Body of pancreas (tissue), 4 donors: ENCODE measurements at regions of chr17 and their contacts with region 1.

Region 1: DNA sequence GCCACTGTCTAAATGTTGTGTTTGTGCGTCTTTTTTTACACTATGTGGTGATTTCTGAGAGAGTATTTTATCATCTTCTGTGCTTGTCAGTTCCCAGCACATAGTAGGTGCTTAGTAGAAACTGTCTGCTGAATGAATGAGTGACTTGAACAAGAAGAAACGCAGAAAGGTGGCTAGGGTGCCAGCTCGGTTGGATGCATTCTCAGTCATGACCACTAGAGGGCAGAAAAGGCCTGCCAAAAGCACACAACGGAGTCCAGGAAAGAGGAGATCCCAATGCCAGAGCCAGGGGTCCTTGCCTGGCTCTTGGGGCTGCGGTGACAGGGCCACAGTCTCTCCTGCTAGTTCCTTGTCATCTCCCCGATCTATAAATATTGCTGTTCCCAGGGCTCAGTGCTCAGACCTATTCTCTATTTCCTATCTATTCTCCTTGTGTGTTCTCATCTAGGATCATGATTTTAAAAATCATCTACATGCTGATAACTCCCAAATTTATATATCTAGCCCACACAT is 57.3 kb upstream of the CCL1 start:
- DNase-seq: peak; percentile 67 to 74 (median 70)
- ATAC-seq: peak; percentile 56
- H3K4me3 ChIP-seq: no peak overlapping the region
- H3K27ac ChIP-seq: no peak overlapping the region
- H3K4me1 ChIP-seq: no peaks in the 10 kb centered on the region
- H3K27me3 ChIP-seq: peaks cover 0 to 8% of the 10 kb centered on the region in 2 donors
- CTCF ChIP-seq: peak; percentile 83 to 88 (median 86)
- POLR2A ChIP-seq: no peak

Region 2: GRCh38 chr17:34637548-34638525 is 217.5 kb after region 1 on chr17:
- intact Hi-C with region 1: loop called (anchors 10 kb)
- DNase-seq: peak; percentile 83 to 85 (median 84)
- ATAC-seq: peak; percentile 95
- H3K4me3 ChIP-seq: peak overlapping the region in 1 of 2 donors; percentile 23
- H3K27ac ChIP-seq: no peak overlapping the region
- H3K4me1 ChIP-seq: peaks cover 11% of the 10 kb centered on the region
- H3K27me3 ChIP-seq: no peaks in the 10 kb centered on the region
- CTCF ChIP-seq: peak; percentile 75 to 93 (median 89)
- POLR2A ChIP-seq: peak in 2 of 3 donors; percentile 23 to 43

Region 3: GRCh38 chr17:35119368-35120165 is 699.3 kb after region 1 on chr17 and contains the start of gene RAD51D:
- intact Hi-C with region 1: loop called (anchors 5 kb)
- DNase-seq: peak; percentile 73 to 83 (median 78)
- ATAC-seq: peak; percentile 96
- H3K4me3 ChIP-seq: peak within 1 kb of the TSS; percentile 60 to 65
- H3K27ac ChIP-seq: peak within 1 kb of the TSS; percentile 8 to 78 (median 69)
- H3K4me1 ChIP-seq: peaks cover 17% of the 10 kb centered on the region
- H3K27me3 ChIP-seq: no peaks in the 10 kb centered on the region
- CTCF ChIP-seq: peak; percentile 67 to 99 (median 93)
- POLR2A ChIP-seq: peak in 2 of 3 donors; percentile 56 to 61
- total RNA-seq, gene RAD51D: 3.4 to 16.2 TPM